ENCODE measurements at regions of chr6 and their contacts with region 1.

Region 1: DNA sequence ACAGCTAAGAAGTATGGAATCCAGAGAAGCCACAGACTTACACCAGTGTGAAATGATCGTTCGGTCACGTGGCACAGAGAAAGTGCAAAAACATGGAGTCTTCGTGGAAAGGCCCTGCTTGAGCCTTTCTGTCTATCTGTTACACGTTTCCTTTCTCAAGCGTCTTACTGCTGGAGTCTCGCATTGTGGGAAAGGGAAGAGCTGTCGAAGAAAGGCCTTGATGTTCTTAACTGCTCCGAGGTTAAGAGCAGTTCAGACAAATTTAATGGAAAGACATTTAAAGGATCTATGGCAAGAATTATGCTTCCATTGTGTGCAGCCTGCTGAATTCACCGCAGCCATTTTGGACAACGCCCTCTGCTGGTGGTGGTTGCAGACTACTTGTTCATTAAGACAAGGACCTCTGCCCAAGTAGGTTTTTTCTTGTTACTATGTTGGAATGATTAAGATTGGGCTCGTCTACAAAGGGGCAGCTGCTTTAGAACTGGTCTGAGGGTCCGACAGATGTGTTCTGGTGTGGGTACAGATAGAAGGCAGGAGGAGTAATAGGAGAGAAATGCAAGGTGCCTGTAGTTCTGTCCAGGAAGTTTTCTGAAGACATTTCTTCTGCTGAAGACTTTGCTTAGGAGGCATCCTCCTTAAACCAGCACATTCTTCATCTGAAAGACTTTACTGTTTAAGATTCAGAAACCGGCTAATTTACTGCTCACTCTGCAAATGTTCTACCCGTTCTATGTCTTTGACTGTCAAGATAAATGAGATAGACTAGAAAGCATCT is 24.7 kb upstream of the CCN6 start:
- DNase-seq: peak; percentile 41 to 82 (median 55)
- ATAC-seq: no peak
- H3K4me3 ChIP-seq: no peak overlapping the region
- H3K4me3 Mint-ChIP-seq: peak overlapping the region; percentile 62
- H3K27ac ChIP-seq: peak overlapping the region; percentile 62 to 92
- H3K27ac Mint-ChIP-seq: peak overlapping the region; percentile 93
- H3K4me1 ChIP-seq: peaks cover 62% of the 10 kb centered on the region
- H3K4me1 Mint-ChIP-seq: peaks cover 83% of the 10 kb centered on the region
- H3K27me3 ChIP-seq: no peaks in the 10 kb centered on the region
- H3K27me3 Mint-ChIP-seq: no peaks in the 10 kb centered on the region
- CTCF ChIP-seq: peak; percentile 61

Region 2: DNA sequence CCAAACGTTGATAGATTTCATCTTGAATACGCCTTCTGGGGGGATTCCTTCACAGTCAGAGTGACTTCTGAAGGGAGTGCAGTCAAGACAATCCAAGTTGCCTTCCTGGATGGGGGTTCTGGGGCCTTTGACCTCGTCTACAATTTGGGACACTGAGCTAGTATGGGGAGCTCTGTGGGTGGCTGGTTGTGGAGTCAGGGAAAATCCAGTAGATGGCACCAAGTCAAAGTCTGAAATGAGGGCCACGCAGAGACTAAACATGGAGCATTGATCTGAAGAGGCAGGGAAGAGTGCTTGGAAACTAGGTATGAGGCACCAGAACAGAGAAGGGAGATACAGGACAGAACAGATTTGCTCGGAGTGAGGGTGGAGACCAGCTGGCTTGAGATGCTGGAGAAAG is 18.9 kb before region 1 on chr6:
- CTCF ChIA-PET with region 1: interaction called, 7 read pairs
- POLR2A ChIA-PET with region 1: interaction called, 44 read pairs
- intact Hi-C with region 1: loop called in 1 of 2 experiments (anchors 2 kb)
- DNase-seq: peak in 7 of 14 experiments; percentile 12 to 64 (median 55)
- ATAC-seq: peak; percentile 86
- H3K4me3 ChIP-seq: no peak overlapping the region
- H3K4me3 Mint-ChIP-seq: no peak overlapping the region
- H3K27ac ChIP-seq: no peak overlapping the region
- H3K27ac Mint-ChIP-seq: no peak overlapping the region
- H3K4me1 ChIP-seq: peaks cover 6% of the 10 kb centered on the region
- H3K4me1 Mint-ChIP-seq: peaks cover 18% of the 10 kb centered on the region
- H3K27me3 ChIP-seq: no peaks in the 10 kb centered on the region
- H3K27me3 Mint-ChIP-seq: no peaks in the 10 kb centered on the region
- CTCF ChIP-seq: peak; percentile 40

Region 3: GRCh38 chr6:112018619-112019416 is 10.4 kb before region 1 on chr6:
- CTCF ChIA-PET with region 1: interaction called, 4 read pairs
- POLR2A ChIA-PET with region 1: interaction called, 44 read pairs
- intact Hi-C with region 1: no loop called
- DNase-seq: no peak
- ATAC-seq: no peak
- H3K4me3 ChIP-seq: no peak overlapping the region
- H3K4me3 Mint-ChIP-seq: no peak overlapping the region
- H3K27ac ChIP-seq: no peak overlapping the region
- H3K27ac Mint-ChIP-seq: no peak overlapping the region
- H3K4me1 ChIP-seq: peaks cover 31% of the 10 kb centered on the region
- H3K4me1 Mint-ChIP-seq: peaks cover 82% of the 10 kb centered on the region
- H3K27me3 ChIP-seq: no peaks in the 10 kb centered on the region
- H3K27me3 Mint-ChIP-seq: no peaks in the 10 kb centered on the region
- CTCF ChIP-seq: no peak

Measured in CD4-positive, alpha-beta T cell (primary cell).